Posterior vena cava (tissue), 2 donors: ENCODE measurements at regions of chr17 and their contacts with region 1.

Region 1: DNA sequence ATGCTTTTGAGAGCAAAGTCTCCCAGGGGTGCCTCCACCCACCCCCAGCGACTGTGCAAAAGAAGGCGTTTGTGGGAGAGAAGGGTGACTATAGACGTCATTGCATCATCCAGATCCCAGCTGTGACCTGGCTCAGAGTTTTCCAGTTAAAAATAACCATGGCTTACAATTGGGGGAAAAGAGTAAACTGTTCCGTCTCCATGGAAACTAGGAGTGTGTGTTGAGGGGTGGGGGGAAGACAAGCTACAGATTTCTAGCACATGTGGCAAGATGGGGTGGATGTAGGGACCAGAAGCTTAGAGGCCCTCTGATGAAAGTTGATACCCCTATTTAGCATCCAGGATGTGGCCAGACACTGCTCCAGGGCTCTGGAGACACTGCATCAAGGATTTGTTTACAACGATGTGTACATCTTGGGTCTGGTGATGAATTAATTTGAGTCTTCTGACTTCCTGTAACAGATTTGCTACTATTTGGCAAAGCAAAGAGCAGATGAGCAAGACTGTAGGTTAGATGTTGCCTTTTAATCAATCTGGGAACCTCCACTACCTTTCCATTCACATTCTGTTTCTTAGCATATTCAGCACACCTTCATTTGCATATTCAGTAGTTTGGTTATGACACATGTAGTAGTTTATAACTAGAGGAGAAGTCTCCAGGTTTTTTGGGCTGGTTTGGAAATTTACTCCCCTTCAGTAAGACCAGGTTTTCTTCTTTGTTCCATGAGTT is 6.2 kb upstream of the DUSP14 start:
- DNase-seq: no peak

Region 2: DNA sequence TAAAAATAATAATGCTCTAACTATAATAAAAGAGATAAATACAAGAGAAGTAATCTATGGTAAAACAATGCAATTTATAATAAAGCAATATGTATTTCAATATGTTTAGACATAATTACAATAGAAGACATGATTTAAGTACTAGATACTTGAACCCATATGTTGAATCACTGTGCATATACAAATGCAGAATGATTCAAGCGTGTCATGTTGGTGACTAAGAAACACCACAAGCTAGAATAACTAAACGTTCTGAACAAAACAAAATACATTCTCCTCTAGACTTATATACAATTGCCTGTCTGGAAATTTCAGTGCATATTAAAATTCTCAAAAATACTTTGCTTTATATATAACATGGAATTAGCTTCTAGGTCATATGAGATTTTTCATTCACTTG is 65.6 kb before region 1 on chr17:
- intact Hi-C with region 1: no loop called
- DNase-seq: no peak

Region 3: GRCh38 chr17:37463032-37463431 is 20.4 kb before region 1 on chr17:
- intact Hi-C with region 1: loop called in 1 of 2 experiments (anchors 1 kb)
- DNase-seq: no peak